ENCODE measurements at regions of chr2 and their contacts with region 1.

Region 1: DNA sequence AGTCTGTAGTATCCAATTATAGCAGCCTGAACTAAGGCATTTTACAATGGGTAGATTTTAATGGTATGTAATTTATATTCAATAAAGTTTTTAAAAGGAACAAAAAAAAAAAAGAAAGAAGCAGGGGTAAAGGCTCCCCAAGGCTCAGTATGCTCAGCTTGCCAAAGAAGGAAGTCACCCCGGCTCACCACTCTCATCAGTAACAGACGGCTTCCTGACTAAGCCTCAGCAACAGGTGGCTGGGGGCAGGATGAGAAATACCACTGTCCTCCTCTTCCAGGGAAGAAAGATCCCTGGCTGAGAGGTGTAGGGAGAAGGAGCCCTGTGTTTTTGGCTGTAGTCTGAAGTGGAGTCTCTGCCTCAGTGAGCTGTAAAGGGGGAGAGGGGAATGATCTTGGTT is 121.2 kb downstream of the ARHGEF4 start:
- DNase-seq: no peak
- H3K4me3 ChIP-seq: no peak overlapping the region
- CTCF ChIP-seq: no peak

Region 2: GRCh38 chr2:131004446-131005209 is 46.7 kb after region 1 on chr2:
- in situ Hi-C with region 1: loop called (anchors 5 kb)
- DNase-seq: no peak
- H3K4me3 ChIP-seq: no peak overlapping the region
- CTCF ChIP-seq: no peak